Vagina (tissue), 2 donors: ENCODE measurements at regions of chrX and their contacts with region 1.

Region 1: DNA sequence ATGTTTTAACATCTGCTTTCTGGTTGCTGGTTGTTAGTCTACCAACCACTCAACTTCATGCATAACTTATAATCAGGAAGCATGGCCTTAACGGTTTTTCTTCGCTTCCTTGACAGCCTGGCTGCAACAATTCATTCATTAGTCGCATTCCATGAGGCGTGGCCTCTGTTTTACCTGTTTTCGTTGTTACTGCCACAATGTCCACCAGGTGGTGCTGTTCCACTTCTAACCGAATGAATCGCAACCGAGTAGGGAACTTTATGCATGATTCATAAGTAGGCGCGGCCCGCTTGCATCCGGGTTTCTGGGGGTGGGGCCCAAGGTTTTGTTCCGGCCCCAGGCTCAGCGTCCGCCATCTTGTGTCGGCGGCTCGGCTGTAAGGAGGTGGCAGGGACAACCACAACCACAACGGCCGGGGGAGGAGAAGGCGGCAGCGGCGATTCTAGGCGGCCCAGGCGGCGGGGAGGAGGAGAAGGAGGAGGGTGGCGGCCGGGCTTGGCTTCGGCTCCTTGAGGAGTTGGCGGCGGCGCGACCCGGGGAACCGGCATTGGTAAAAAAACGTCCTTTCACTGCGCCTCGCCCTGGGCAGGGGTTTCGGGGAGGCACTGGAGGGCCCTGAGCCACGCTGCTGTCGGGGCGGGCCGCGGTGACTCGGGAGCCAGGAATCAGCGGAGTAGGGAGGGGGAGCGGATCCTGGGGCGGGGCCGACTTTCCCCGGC is at the start of gene UBA1:
- DNase-seq: peak in 1 of 2 donors; percentile 98
- H3K4me3 ChIP-seq: peak within 1 kb of the TSS; percentile 87 to 94
- H3K27ac ChIP-seq: peak within 1 kb of the TSS; percentile 97
- H3K4me1 ChIP-seq: peaks cover 44% of the 10 kb centered on the region
- H3K27me3 ChIP-seq: no peaks in the 10 kb centered on the region
- CTCF ChIP-seq: peak; percentile 61 to 96 (median 85)
- POLR2A ChIP-seq: peak in 1 of 2 donors; percentile 82
- total RNA-seq, gene UBA1: 168 TPM

Region 2: DNA sequence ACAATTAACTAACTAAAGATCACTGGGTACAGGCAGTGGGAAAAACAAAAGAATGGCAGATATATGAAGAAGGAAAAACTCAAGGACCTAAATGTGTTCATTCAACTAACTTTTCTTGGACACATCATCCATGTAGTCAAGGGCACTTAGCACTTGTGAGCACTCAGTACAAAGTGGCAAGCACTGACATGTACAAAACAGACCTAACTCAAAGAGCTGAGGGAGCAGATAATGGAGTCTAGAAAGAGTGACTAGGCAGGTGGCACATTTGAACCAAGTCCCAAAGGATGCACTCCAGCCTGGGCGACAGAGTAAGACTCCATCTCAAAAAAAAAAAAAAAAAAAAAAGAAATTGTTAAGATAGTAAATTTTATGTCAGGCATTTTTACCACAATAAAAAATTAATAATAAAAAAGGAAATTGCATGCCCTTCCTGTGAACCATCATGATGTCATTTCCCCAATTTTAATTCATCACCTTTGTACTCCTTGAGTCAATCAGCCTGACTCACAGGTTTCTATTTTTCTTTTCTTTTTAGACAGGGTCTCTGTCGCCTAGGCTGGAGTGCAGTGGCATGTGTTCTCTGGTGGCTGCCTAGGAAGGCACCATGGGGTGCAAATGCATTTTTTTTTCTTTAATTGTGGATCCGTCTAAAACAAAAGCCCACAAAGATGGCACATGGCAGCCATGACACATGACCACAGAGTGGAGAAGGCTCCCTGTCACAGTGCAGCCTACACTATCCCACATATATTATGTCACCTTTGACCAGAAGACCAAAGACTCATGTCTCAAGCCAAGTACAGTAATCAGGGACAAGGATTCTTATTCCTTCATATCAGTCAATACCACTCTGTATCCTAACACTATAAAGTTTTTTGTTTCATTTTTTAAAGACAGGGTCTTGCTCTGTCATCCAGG is 528.1 kb before region 1 on chrX:
- intact Hi-C with region 1: no loop called
- DNase-seq: no peak
- H3K4me3 ChIP-seq: no peak overlapping the region
- H3K27ac ChIP-seq: no peak overlapping the region
- H3K4me1 ChIP-seq: no peaks in the 10 kb centered on the region
- H3K27me3 ChIP-seq: no peaks in the 10 kb centered on the region
- CTCF ChIP-seq: no peak
- POLR2A ChIP-seq: no peak

Region 3: DNA sequence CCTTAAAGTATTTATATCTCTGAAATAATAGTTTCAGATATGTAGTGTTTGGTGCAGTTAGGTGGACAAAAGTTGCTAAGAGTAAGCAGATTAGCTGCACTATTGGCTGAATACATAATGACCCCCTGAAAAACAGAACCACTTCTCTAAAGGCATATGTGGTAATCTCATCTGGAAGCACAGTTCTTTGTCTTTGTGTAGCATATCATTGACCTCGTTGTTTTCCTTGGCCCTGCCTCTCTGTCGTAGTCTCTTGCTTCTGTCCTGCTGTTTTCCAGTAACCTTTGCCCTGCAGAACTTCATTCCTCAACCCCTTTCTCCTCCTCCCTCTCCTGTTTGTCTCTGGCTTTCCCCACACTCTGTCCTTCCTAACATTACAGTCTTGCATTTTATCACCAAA is 240.0 kb before region 1 on chrX:
- intact Hi-C with region 1: no loop called
- DNase-seq: no peak
- H3K4me3 ChIP-seq: no peak overlapping the region
- H3K27ac ChIP-seq: no peak overlapping the region
- H3K4me1 ChIP-seq: no peaks in the 10 kb centered on the region
- H3K27me3 ChIP-seq: no peaks in the 10 kb centered on the region
- CTCF ChIP-seq: no peak
- POLR2A ChIP-seq: no peak

Region 4: DNA sequence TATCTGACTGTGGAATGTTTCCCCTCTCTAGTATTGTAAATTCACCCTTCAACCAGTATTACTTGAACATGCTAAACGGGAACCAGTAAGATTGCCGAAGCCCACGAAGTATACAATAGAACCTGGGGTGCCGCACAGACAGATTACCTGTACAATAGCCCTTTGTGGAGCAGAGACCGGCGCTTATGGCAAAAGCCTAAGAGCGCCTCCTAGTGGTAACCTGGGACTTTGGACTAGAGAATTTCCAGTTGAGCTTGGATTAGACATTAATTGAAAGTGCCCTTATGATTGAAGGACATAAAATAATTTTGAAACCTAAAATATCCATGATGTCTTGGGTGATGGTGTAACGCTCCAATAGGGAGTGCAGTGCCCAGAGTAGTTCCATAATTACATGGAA is 190.9 kb after region 1 on chrX:
- intact Hi-C with region 1: loop called (anchors 2 kb)
- DNase-seq: no peak
- H3K4me3 ChIP-seq: no peak overlapping the region
- H3K27ac ChIP-seq: no peak overlapping the region
- H3K4me1 ChIP-seq: no peaks in the 10 kb centered on the region
- H3K27me3 ChIP-seq: no peaks in the 10 kb centered on the region
- CTCF ChIP-seq: peak; percentile 14 to 61 (median 54)
- POLR2A ChIP-seq: no peak

Region 5: DNA sequence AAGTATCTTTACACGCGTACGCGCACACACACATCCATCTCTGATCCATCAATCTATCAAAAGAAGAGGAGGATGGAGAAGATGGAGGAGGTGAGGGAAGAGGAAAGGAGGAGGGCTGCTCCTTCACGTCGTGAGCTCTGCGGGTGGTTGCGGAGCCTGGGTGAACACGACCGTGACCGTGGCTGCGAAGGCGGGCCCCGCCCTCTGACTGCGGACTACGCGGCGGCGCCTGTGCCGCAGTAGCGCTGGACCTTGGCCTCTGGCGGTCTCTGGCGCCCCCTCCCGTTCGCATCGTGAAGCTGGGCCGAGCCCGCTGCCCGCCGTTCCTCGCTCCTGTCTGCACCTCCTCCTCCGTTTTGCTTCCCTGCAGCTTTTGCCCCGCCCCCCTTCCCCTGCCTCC is 329.7 kb after region 1 on chrX:
- intact Hi-C with region 1: loop called (anchors 10 kb)
- DNase-seq: no peak
- H3K4me3 ChIP-seq: peak overlapping the region; percentile 39 to 48
- H3K27ac ChIP-seq: no peak overlapping the region
- H3K4me1 ChIP-seq: no peaks in the 10 kb centered on the region
- H3K27me3 ChIP-seq: no peaks in the 10 kb centered on the region
- CTCF ChIP-seq: peak in 2 of 3 experiments; percentile 61 to 78
- POLR2A ChIP-seq: no peak

Region 6: GRCh38 chrX:47802589-47802988 is 609.0 kb after region 1 on chrX:
- intact Hi-C with region 1: no loop called
- DNase-seq: no peak
- H3K4me3 ChIP-seq: no peak overlapping the region
- H3K27ac ChIP-seq: no peak overlapping the region
- H3K4me1 ChIP-seq: no peaks in the 10 kb centered on the region
- H3K27me3 ChIP-seq: no peaks in the 10 kb centered on the region
- CTCF ChIP-seq: no peak
- POLR2A ChIP-seq: no peak